Activated T-helper 2 cell treated with anti-CD3 and anti-CD28 coated beads, Interferon-gamma antibody, Interleukin-2, Interleukin-4, amounts not matched to agents 10 μg/mL and 5 μg/mL and 100 μg/mL, durations not matched to agents 14 hours and 24 hours and 36 hours (primary cell): ENCODE measurements at regions of chr6 and their contacts with region 1.

Region 1: DNA sequence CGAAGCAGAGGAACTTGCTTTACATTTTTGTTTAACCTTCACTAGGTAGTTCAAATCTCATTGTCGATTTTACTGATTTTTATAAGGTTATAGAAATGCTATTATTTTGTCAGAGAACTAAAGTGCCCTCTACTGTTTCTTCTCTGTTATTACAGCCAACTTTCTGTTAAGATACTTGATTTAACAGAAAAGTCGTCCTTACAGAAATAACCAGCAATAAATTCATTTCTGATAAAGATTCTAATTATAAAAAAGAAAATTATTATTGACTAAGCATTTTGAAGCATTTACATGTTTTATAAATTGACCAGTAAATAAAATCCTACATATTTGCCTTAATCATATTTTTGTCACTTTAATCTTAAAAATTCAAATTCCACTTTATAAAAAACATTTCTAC is 60.8 kb downstream of the OGFRL1 start:
- DNase-seq: no peak
- H3K4me3 Mint-ChIP-seq: no peak overlapping the region
- H3K27ac Mint-ChIP-seq: no peak overlapping the region
- H3K4me1 Mint-ChIP-seq: no peaks in the 10 kb centered on the region
- H3K27me3 Mint-ChIP-seq: peaks cover 9% of the 10 kb centered on the region

Region 2: GRCh38 chr6:71124340-71124739 is 225.1 kb before region 1 on chr6:
- intact Hi-C with region 1: no loop called
- DNase-seq: no peak
- H3K4me3 Mint-ChIP-seq: no peak overlapping the region
- H3K27ac Mint-ChIP-seq: no peak overlapping the region
- H3K4me1 Mint-ChIP-seq: no peaks in the 10 kb centered on the region
- H3K27me3 Mint-ChIP-seq: no peaks in the 10 kb centered on the region

Region 3: DNA sequence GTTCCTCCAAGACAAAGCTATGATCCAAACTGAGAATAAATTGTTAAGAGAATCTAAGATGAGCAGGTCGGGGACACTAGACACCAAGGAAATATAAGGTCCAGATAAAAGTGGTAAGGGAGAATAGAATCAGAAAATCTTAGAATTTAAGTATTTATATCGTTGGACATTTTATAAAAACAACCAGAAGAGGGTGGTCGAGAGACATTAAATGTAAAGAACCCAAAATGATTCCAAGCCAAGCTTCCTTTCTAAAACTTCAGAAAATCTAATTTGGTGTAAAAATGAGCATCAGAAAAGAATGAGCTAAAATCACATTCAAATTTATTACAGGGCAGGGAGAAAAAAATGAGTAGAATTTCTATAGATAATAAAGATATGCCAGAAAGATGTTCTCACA is 158.6 kb before region 1 on chr6:
- intact Hi-C with region 1: loop called (anchors 2 kb)
- DNase-seq: no peak
- H3K4me3 Mint-ChIP-seq: no peak overlapping the region
- H3K27ac Mint-ChIP-seq: no peak overlapping the region
- H3K4me1 Mint-ChIP-seq: no peaks in the 10 kb centered on the region
- H3K27me3 Mint-ChIP-seq: peaks cover 6% of the 10 kb centered on the region

Region 4: DNA sequence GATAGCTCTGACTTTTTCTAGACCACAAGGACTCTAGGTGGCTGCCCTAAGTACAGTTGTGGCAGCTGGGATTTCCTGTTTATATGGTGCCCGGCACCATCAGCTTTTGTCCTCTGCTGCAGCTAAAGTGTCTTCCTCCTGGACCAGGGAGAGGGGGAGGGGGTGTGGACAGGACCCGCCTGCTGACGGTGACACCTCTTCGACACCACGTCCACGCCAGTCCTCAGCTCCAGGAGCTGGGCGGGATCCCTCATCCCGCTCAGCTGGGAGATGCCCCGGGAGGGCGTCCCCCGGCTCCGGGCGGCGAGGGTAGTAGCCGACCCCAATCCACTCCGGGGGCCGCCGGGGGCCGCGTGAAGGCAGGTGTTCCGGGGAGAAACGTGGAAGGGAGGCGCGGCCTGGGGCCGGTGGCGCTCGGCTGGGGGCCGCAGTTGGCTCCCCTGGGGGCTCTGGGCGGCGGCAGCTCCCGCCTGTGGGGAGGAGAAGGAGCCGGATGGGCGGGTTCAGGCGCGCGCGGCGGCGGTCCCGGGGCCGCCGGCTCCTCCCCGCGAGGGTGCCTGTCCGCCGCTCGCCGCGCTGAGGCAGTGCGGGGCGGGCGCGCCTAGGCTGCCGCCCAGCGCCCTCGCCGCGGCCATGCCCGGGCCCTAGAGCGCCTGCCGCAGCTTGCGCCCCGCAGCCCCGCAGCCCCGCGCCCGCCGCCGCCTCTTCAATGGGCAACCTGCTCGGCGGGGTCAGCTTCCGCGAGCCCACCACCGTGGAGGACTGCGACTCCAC is 61.0 kb before region 1 on chr6 and contains the start of gene OGFRL1:
- intact Hi-C with region 1: loop called (anchors 5 kb)
- DNase-seq: peak; percentile 64
- H3K4me3 Mint-ChIP-seq: peak within 1 kb of the TSS; percentile 77
- H3K27ac Mint-ChIP-seq: peak within 1 kb of the TSS; percentile 59
- H3K4me1 Mint-ChIP-seq: peaks cover 24% of the 10 kb centered on the region
- H3K27me3 Mint-ChIP-seq: peaks cover 35% of the 10 kb centered on the region
- total RNA-seq, gene OGFRL1: 2.9 and 3.3 TPM in 2 replicates